ENCODE measurements at regions of chrX and their contacts with region 1.

Region 1: DNA sequence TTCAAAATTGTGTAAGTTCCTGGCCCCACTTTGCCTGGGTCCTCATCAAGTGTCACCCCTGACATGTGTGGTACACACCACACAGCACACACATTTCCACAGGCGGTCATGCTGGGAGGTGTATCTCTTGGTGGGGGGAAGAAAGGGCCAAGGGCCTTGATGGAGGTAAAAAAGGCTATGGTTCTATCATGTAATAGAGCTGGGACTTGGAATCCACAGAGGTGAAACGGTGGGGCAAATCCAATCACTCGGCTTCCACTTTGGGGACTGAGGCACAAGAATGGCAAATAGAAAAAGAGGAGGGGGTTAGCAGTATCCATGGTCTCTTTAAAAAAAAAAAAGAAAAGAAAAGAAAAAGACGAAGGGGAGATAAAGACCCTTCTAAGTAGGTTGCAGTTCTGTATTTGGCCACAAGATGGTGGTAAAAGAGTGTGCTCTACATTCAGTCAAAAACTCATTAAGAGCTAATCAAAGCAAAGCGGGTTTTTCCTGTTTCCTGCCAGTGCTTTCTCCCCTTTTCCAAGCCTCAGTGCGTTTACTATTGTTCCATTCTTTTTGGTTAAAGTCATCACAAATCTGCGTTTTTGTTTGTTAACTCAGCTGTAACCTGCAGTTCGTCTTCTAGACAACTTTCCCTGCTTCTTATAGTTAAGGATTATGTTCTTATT is 37.0 kb upstream of the ATP6AP2 start:
- DNase-seq: peak; percentile 40
- CTCF ChIP-seq: peak; percentile 64

Region 2: GRCh38 chrX:40563791-40564190 is 20.0 kb after region 1 on chrX:
- CTCF ChIA-PET with region 1: interaction called, 29 read pairs
- POLR2A ChIA-PET with region 1: no interaction called
- DNase-seq: no peak
- CTCF ChIP-seq: no peak

Region 3: GRCh38 chrX:40570346-40571093 is 26.7 kb after region 1 on chrX:
- CTCF ChIA-PET with region 1: interaction called, 29 read pairs
- POLR2A ChIA-PET with region 1: no interaction called
- DNase-seq: peak; percentile 35
- CTCF ChIP-seq: no peak

Region 4: GRCh38 chrX:40784516-40785151 is 240.8 kb after region 1 on chrX:
- CTCF ChIA-PET with region 1: no interaction called
- POLR2A ChIA-PET with region 1: no interaction called
- DNase-seq: no peak
- CTCF ChIP-seq: no peak